CD8-positive, alpha-beta T cell (primary cell): ENCODE measurements at regions of chr5 and their contacts with region 1.

Region 1: GRCh38 chr5:14727428-14727865 is 62.9 kb downstream of the OTULIN start:
- DNase-seq: peak; percentile 44 to 86 (median 76)
- ATAC-seq: peak; percentile 71
- H3K4me3 ChIP-seq: no peak overlapping the region
- H3K4me3 Mint-ChIP-seq: no peak overlapping the region
- H3K27ac ChIP-seq: no peak overlapping the region
- H3K27ac Mint-ChIP-seq: no peak overlapping the region
- H3K4me1 ChIP-seq: no peaks in the 10 kb centered on the region
- H3K4me1 Mint-ChIP-seq: peaks cover 8% of the 10 kb centered on the region
- H3K27me3 ChIP-seq: no peaks in the 10 kb centered on the region
- H3K27me3 Mint-ChIP-seq: no peaks in the 10 kb centered on the region
- CTCF ChIP-seq: peak; percentile 97

Region 2: GRCh38 chr5:14644623-14645237 is 82.7 kb before region 1 on chr5:
- CTCF ChIA-PET with region 1: no interaction called
- POLR2A ChIA-PET with region 1: no interaction called
- intact Hi-C with region 1: no loop called
- DNase-seq: no peak
- ATAC-seq: no peak
- H3K4me3 ChIP-seq: no peak overlapping the region
- H3K4me3 Mint-ChIP-seq: no peak overlapping the region
- H3K27ac ChIP-seq: no peak overlapping the region
- H3K27ac Mint-ChIP-seq: no peak overlapping the region
- H3K4me1 ChIP-seq: peaks cover 4% of the 10 kb centered on the region
- H3K4me1 Mint-ChIP-seq: no peaks in the 10 kb centered on the region
- H3K27me3 ChIP-seq: no peaks in the 10 kb centered on the region
- H3K27me3 Mint-ChIP-seq: peaks cover 11% of the 10 kb centered on the region
- CTCF ChIP-seq: no peak

Region 3: GRCh38 chr5:14685757-14686156 is 41.7 kb before region 1 on chr5:
- CTCF ChIA-PET with region 1: interaction called, 71 read pairs
- POLR2A ChIA-PET with region 1: no interaction called
- intact Hi-C with region 1: loop called (anchors 1 to 2 kb)
- DNase-seq: peak in 6 of 9 experiments; percentile 31 to 76 (median 56)
- ATAC-seq: peak; percentile 87
- H3K4me3 ChIP-seq: no peak overlapping the region
- H3K4me3 Mint-ChIP-seq: peak overlapping the region; percentile 53
- H3K27ac ChIP-seq: no peak overlapping the region
- H3K27ac Mint-ChIP-seq: peak overlapping the region; percentile 69
- H3K4me1 ChIP-seq: peaks cover 3% of the 10 kb centered on the region
- H3K4me1 Mint-ChIP-seq: peaks cover 13% of the 10 kb centered on the region
- H3K27me3 ChIP-seq: no peaks in the 10 kb centered on the region
- H3K27me3 Mint-ChIP-seq: no peaks in the 10 kb centered on the region
- CTCF ChIP-seq: peak; percentile 75

Region 4: GRCh38 chr5:14706615-14707021 is 20.8 kb before region 1 on chr5:
- CTCF ChIA-PET with region 1: interaction called, 72 read pairs
- POLR2A ChIA-PET with region 1: interaction called, 3 read pairs
- intact Hi-C with region 1: loop called in 1 of 2 experiments (anchors 2 kb)
- DNase-seq: peak in 8 of 9 experiments; percentile 33 to 83 (median 60)
- ATAC-seq: peak; percentile 94
- H3K4me3 ChIP-seq: no peak overlapping the region
- H3K4me3 Mint-ChIP-seq: peak overlapping the region; percentile 76
- H3K27ac ChIP-seq: peak overlapping the region; percentile 46 to 72
- H3K27ac Mint-ChIP-seq: peak overlapping the region; percentile 99
- H3K4me1 ChIP-seq: peaks cover 79% of the 10 kb centered on the region
- H3K4me1 Mint-ChIP-seq: peaks cover 80% of the 10 kb centered on the region
- H3K27me3 ChIP-seq: no peaks in the 10 kb centered on the region
- H3K27me3 Mint-ChIP-seq: no peaks in the 10 kb centered on the region
- CTCF ChIP-seq: no peak

Region 5: GRCh38 chr5:14871210-14872069 is 144.0 kb after region 1 on chr5 and contains the start of gene ANKH:
- CTCF ChIA-PET with region 1: interaction called, 14 read pairs
- POLR2A ChIA-PET with region 1: interaction called, 5 read pairs
- intact Hi-C with region 1: loop called (anchors 1 to 5 kb)
- DNase-seq: peak; percentile 66 to 93 (median 81)
- ATAC-seq: peak; percentile 81
- H3K4me3 ChIP-seq: peak within 1 kb of the TSS; percentile 63 to 78
- H3K4me3 Mint-ChIP-seq: peak within 1 kb of the TSS; percentile 95
- H3K27ac ChIP-seq: peak within 1 kb of the TSS; percentile 63 to 66
- H3K27ac Mint-ChIP-seq: peak within 1 kb of the TSS; percentile 94
- H3K4me1 ChIP-seq: peaks cover 13% of the 10 kb centered on the region
- H3K4me1 Mint-ChIP-seq: peaks cover 38% of the 10 kb centered on the region
- H3K27me3 ChIP-seq: no peaks in the 10 kb centered on the region
- H3K27me3 Mint-ChIP-seq: no peaks in the 10 kb centered on the region
- CTCF ChIP-seq: no peak
- total RNA-seq, gene ANKH: 56.0 to 57.7 TPM

Region 6: DNA sequence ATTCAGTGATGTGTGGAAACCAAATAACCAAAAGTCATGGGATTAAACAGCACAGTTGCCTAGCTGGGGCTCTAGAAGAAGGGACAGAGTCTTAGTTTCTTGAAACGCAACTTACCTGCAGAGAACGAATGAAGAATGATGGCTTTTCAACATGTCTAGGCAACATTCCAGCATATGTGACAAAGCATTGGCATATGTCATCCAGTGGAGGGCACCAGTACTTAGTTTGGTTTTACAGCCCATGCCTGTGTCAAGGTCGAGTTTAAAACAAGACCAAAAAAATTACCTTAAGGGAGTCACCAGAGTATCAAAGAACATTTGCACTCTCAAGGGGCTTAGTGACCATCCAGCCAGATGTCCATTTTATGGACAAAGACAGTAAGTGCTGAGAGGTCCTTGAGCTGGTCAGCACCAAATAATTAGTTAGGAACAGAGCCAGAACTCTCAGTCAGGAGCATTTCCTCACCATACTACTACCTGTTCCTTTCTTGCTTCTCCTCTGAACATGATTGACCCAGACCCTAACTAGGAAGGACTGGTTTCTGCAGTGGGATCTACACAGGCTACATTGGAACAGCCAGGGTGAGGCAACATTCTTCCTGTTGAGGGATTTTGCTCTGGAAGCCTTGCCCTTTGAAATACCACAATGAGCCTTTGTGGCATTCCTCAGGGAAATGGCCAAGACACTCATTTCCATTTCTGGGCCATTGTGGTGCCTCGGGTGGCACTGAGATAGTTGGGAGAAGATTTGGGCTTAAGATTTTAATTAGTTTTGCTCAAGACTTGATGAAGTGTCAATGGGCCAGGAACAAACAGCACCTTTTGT is 219.6 kb after region 1 on chr5:
- CTCF ChIA-PET with region 1: interaction called, 5 read pairs
- POLR2A ChIA-PET with region 1: no interaction called
- intact Hi-C with region 1: loop called (anchors 1 to 5 kb)
- DNase-seq: peak in 7 of 9 experiments; percentile 15 to 76 (median 38)
- ATAC-seq: peak; percentile 97
- H3K4me3 ChIP-seq: no peak overlapping the region
- H3K4me3 Mint-ChIP-seq: no peak overlapping the region
- H3K27ac ChIP-seq: no peak overlapping the region
- H3K27ac Mint-ChIP-seq: no peak overlapping the region
- H3K4me1 ChIP-seq: no peaks in the 10 kb centered on the region
- H3K4me1 Mint-ChIP-seq: peaks cover 4% of the 10 kb centered on the region
- H3K27me3 ChIP-seq: no peaks in the 10 kb centered on the region
- H3K27me3 Mint-ChIP-seq: peaks cover 14% of the 10 kb centered on the region
- CTCF ChIP-seq: peak; percentile 68

Region 7: DNA sequence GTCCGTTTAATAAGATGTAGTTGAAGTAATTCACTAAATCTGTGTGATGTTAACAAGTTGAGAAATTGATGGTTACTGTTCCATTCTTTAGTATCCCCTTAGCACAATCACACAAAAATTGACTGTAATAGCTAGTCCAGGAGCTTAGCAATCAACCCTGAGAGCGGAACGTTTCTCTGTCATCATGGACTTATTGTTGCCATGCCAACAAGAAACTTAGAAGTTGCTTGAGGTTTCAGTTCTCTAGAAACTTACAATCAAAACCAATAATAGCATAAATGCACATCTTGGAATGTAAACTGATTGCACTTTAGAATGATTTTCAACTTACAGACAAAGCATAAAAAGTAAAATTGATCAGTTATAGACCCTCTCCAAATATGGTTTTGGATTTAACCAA is 269.6 kb after region 1 on chr5:
- CTCF ChIA-PET with region 1: interaction called, 100 read pairs
- POLR2A ChIA-PET with region 1: no interaction called
- intact Hi-C with region 1: no loop called
- DNase-seq: peak in 1 of 9 experiments; percentile 35
- ATAC-seq: no peak
- H3K4me3 ChIP-seq: no peak overlapping the region
- H3K4me3 Mint-ChIP-seq: no peak overlapping the region
- H3K27ac ChIP-seq: no peak overlapping the region
- H3K27ac Mint-ChIP-seq: no peak overlapping the region
- H3K4me1 ChIP-seq: peaks cover 4% of the 10 kb centered on the region
- H3K4me1 Mint-ChIP-seq: peaks cover 14% of the 10 kb centered on the region
- H3K27me3 ChIP-seq: no peaks in the 10 kb centered on the region
- H3K27me3 Mint-ChIP-seq: no peaks in the 10 kb centered on the region
- CTCF ChIP-seq: no peak

Region 8: GRCh38 chr5:15013654-15014463 is 286.4 kb after region 1 on chr5:
- CTCF ChIA-PET with region 1: interaction called, 8 read pairs
- POLR2A ChIA-PET with region 1: no interaction called
- intact Hi-C with region 1: loop called (anchors 1 kb)
- DNase-seq: peak in 2 of 9 experiments; percentile 44 to 59
- ATAC-seq: peak; percentile 44
- H3K4me3 ChIP-seq: no peak overlapping the region
- H3K4me3 Mint-ChIP-seq: no peak overlapping the region
- H3K27ac ChIP-seq: no peak overlapping the region
- H3K27ac Mint-ChIP-seq: no peak overlapping the region
- H3K4me1 ChIP-seq: no peaks in the 10 kb centered on the region
- H3K4me1 Mint-ChIP-seq: no peaks in the 10 kb centered on the region
- H3K27me3 ChIP-seq: no peaks in the 10 kb centered on the region
- H3K27me3 Mint-ChIP-seq: peaks cover 3% of the 10 kb centered on the region
- CTCF ChIP-seq: peak; percentile 74

Region 9: GRCh38 chr5:15151653-15152052 is 424.2 kb after region 1 on chr5:
- CTCF ChIA-PET with region 1: no interaction called
- POLR2A ChIA-PET with region 1: no interaction called
- intact Hi-C with region 1: no loop called
- DNase-seq: no peak
- ATAC-seq: no peak
- H3K4me3 ChIP-seq: no peak overlapping the region
- H3K4me3 Mint-ChIP-seq: no peak overlapping the region
- H3K27ac ChIP-seq: no peak overlapping the region
- H3K27ac Mint-ChIP-seq: no peak overlapping the region
- H3K4me1 ChIP-seq: no peaks in the 10 kb centered on the region
- H3K4me1 Mint-ChIP-seq: no peaks in the 10 kb centered on the region
- H3K27me3 ChIP-seq: no peaks in the 10 kb centered on the region
- H3K27me3 Mint-ChIP-seq: no peaks in the 10 kb centered on the region
- CTCF ChIP-seq: no peak